Common myeloid progenitor, CD34-positive (primary cell): ENCODE measurements at regions of chr3 and their contacts with region 1.

Region 1: DNA sequence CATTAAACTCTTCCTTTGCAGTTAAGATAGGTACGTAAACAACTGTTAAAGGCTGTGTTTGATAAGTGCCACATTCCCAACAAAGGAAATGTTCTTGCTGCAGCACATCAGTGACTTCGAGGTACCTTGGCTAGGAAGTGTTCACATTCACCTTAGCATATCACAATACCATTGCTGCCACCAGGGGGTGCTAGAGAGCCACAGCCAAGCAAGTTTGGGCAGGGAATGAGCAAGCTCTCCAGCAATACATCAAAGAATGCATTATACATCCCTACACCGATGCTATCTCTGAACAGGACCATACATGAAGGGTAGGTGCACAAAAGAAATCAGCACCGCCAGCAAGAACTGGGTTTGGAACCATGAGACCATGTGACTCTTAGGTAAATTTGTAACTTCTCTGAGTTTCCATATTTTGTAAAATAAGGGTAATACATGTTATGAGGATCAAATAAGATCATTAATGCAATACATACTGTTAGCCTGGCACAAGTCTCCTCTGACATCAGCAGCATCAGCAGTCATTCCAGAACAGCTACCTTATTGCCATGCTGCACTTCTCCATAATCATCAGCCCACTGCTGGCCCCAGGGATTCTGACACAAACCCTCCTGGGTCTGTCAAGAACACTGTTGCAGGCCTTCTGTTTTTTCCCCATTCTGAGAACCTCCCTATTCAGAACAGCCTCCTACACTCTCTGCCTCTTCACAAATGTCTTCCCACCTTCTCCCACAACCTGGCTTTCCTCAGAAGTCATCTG is 37.6 kb downstream of the RYK start:
- DNase-seq: peak; percentile 76 to 85 (median 77)
- H3K4me3 ChIP-seq: no peak overlapping the region
- H3K27ac ChIP-seq: no peak overlapping the region
- H3K4me1 ChIP-seq: peaks cover 0 to 4% (median 2%) of the 10 kb centered on the region in 4 experiments
- H3K27me3 ChIP-seq: no peaks in the 10 kb centered on the region

Region 2: DNA sequence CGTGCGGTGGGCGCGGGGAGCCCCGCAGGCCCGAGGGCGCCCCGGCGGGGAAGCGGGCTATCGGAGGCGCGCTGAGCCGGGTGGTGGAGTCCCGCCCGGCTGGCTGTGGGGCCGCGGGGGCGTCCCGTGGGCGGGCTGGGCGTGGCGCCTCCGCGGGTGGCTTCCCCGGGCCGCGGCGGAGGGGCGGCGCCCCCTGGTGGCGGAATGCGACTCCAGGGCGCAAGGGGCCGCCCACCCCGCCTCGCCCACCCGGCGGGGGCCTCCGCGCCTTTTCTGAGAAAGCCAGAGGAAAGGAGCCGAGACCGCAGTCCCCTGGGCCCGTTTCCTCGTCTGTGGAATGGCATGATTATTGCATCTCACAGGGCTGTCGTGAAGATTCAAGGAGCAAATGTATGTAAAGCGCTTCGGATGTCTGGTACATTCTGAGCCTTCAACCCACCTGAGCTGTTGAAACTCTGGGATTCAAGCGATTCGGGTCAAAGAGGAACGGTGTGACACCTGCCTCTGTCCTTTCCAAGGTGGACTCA is 285.5 kb before region 1 on chr3:
- CTCF ChIA-PET with region 1: interaction called, 140 read pairs
- POLR2A ChIA-PET with region 1: no interaction called
- DNase-seq: peak; percentile 64 to 87 (median 82)
- H3K4me3 ChIP-seq: peak overlapping the region; percentile 44 to 81 (median 65)
- H3K27ac ChIP-seq: no peak overlapping the region
- H3K4me1 ChIP-seq: peaks cover 0 to 18% (median 15%) of the 10 kb centered on the region in 4 experiments
- H3K27me3 ChIP-seq: peaks cover 0 to 3% (median 0%) of the 10 kb centered on the region in 5 experiments

Region 3: DNA sequence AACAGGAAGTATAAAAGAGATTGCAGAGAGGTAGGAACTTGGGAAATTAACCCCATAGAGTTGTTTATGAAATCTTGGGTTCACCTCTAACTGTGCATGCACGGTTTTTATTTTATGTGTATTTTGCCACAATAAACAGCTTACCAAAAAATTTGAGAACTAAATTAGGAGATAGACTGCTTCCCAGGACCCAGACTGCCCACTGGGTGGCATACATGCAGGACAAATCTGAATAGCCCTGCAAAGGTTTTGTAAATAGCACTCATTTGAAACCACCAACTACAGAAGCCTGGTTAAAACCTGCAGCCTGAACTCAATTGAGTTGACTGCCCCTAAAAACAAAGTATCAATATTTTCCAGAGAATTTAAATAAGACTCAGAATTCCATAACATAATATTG is 86.9 kb before region 1 on chr3:
- CTCF ChIA-PET with region 1: no interaction called
- POLR2A ChIA-PET with region 1: no interaction called
- DNase-seq: no peak
- H3K4me3 ChIP-seq: no peak overlapping the region
- H3K27ac ChIP-seq: no peak overlapping the region
- H3K4me1 ChIP-seq: peaks cover 0 to 5% (median 0%) of the 10 kb centered on the region in 4 experiments
- H3K27me3 ChIP-seq: no peaks in the 10 kb centered on the region

Region 4: DNA sequence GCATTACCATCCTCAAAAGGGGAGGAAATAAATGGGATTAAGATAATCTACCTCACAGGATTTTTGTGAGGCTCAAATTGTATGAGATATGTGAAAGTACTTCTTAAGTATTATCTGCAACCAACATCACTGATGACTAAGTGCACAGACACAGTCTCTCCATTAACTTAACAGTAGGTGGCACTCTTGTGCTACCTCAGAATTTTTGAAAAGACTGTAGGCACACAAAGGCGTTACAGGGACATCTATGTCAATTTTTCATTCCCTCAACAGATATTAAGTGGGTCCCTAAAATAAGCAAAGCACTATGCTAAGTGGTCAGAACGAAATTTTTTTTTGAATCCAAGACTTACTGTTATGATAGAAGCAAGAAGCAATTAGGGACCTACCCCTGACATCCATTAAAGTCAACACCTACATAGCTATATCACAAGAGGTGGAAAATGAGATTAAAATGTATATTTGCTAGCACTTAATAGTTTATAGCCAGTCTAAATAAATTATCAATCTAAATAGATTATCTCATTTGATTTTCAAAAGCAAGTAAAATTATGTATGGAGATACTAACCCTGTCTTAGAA is 15.3 kb before region 1 on chr3:
- CTCF ChIA-PET with region 1: interaction called, 44 read pairs
- POLR2A ChIA-PET with region 1: no interaction called
- DNase-seq: peak; percentile 61 to 83 (median 79)
- H3K4me3 ChIP-seq: no peak overlapping the region
- H3K27ac ChIP-seq: no peak overlapping the region
- H3K4me1 ChIP-seq: no peaks in the 10 kb centered on the region
- H3K27me3 ChIP-seq: no peaks in the 10 kb centered on the region

Region 5: GRCh38 chr3:134242649-134243617 is 29.8 kb after region 1 on chr3:
- CTCF ChIA-PET with region 1: interaction called, 13 read pairs
- POLR2A ChIA-PET with region 1: no interaction called
- DNase-seq: peak in 2 of 3 donors; percentile 30 to 35
- H3K4me3 ChIP-seq: no peak overlapping the region
- H3K27ac ChIP-seq: no peak overlapping the region
- H3K4me1 ChIP-seq: peaks cover 0 to 13% (median 5%) of the 10 kb centered on the region in 4 experiments
- H3K27me3 ChIP-seq: no peaks in the 10 kb centered on the region

Region 6: DNA sequence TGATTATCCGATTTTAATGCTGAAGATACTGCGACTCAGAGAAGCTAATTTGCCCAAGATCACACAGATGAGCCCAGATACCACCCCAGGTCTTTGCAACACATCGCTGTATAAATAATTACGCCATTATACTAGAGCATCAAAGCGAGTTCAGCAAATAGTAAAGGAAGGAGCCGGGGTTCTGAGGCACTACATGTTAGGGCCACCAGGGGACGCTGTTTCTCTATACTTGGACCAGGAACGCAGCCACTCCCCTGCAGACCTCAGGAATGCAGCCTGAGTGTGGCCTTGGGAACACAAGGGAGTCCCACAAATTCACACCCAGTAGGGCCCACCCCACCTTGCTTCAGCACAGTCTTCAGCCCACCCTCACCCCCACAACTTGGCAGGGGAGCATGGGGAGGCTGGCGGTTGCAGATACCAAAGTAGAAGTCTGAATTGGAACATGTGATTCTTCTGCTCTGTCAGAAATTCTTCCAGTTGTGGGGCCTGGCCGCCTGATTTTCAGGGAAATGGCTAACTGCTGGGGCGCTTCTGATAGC is 95.3 kb after region 1 on chr3:
- CTCF ChIA-PET with region 1: interaction called, 27 read pairs
- POLR2A ChIA-PET with region 1: no interaction called
- DNase-seq: peak; percentile 73 to 82 (median 74)
- H3K4me3 ChIP-seq: peak overlapping the region in 1 of 7 experiments; percentile 35
- H3K27ac ChIP-seq: no peak overlapping the region
- H3K4me1 ChIP-seq: peaks cover 0 to 9% (median 6%) of the 10 kb centered on the region in 4 experiments
- H3K27me3 ChIP-seq: peaks cover 0 to 32% (median 18%) of the 10 kb centered on the region in 5 experiments

Region 7: DNA sequence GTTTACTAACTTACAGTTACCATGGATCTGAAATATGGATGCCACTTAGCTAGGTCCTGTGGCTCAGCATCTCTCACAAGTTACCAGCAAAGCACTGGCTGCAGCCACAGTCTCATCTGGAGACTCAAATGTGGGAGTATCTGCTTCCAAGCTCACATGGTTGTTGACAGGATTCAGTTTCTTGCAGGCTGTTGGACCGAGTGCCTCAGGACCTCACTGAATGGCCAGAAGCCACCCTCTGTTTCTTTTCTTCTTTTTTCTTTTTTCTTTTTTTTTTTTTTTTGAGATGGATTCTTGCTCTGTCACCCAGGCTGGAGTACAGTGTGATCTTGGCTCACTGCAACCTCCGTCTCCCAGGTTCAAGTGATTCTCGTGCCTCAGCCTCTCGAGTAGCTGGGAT is 181.3 kb after region 1 on chr3:
- CTCF ChIA-PET with region 1: no interaction called
- POLR2A ChIA-PET with region 1: no interaction called
- DNase-seq: no peak
- H3K4me3 ChIP-seq: no peak overlapping the region
- H3K27ac ChIP-seq: no peak overlapping the region
- H3K4me1 ChIP-seq: peaks cover 0 to 23% (median 13%) of the 10 kb centered on the region in 4 experiments
- H3K27me3 ChIP-seq: peaks cover 0 to 5% (median 0%) of the 10 kb centered on the region in 5 experiments